ENCODE measurements at regions of chr6 and their contacts with region 1.

Region 1: GRCh38 chr6:24520929-24521546 is 26.3 kb downstream of the ALDH5A1 start:
- DNase-seq: peak; percentile 30 to 39
- ATAC-seq: peak; percentile 74 to 79
- H3K4me3 ChIP-seq: no peak overlapping the region
- H3K27ac ChIP-seq: no peak overlapping the region
- H3K4me1 ChIP-seq: no peaks in the 10 kb centered on the region
- H3K27me3 ChIP-seq: no peaks in the 10 kb centered on the region
- CTCF ChIP-seq: peak in 4 of 5 experiments; percentile 22 to 75 (median 56)
- POLR2A ChIP-seq: no peak

Region 2: GRCh38 chr6:24296944-24297343 is 224.1 kb before region 1 on chr6:
- in situ Hi-C with region 1: no loop called
- intact Hi-C with region 1: no loop called
- DNase-seq: no peak
- ATAC-seq: no peak
- H3K4me3 ChIP-seq: no peak overlapping the region
- H3K27ac ChIP-seq: no peak overlapping the region
- H3K4me1 ChIP-seq: no peaks in the 10 kb centered on the region
- H3K27me3 ChIP-seq: no peaks in the 10 kb centered on the region
- CTCF ChIP-seq: no peak
- POLR2A ChIP-seq: no peak

Region 3: DNA sequence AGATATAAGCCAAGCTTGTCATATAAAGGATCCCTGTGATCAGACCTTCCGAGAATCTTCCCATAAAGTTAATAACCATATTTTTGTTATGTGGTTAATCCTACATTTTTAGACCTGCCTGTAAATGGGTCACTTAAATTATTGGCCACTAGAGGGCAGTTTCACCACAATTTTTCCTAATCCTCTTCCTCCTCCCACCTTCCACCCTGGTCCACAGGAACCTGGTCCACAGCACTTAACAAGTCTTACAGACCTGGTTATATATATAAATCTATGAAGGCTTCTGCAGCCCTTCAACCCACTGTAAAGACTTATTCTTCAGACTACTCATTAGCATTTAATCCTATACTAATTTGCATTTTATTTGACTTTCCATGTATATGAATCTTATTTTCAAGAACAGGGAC is 90.0 kb before region 1 on chr6:
- in situ Hi-C with region 1: loop called in 2 of 4 experiments (anchors 5 to 10 kb)
- intact Hi-C with region 1: loop called (anchors 2 kb)
- DNase-seq: no peak
- ATAC-seq: peak in 1 of 2 donors; percentile 70
- H3K4me3 ChIP-seq: no peak overlapping the region
- H3K27ac ChIP-seq: no peak overlapping the region
- H3K4me1 ChIP-seq: peaks cover 5 to 13% of the 10 kb centered on the region in 2 donors
- H3K27me3 ChIP-seq: no peaks in the 10 kb centered on the region
- CTCF ChIP-seq: peak; percentile 41 to 73 (median 68)
- POLR2A ChIP-seq: no peak